WTC11 (cell line): ENCODE measurements at regions of chr13 and their contacts with region 1.

Region 1: GRCh38 chr13:31909864-31910551 is 121.6 kb upstream of the FRY start:
- DNase-seq: no peak
- ATAC-seq: peak; percentile 47
- H3K4me3 Mint-ChIP-seq: no peak overlapping the region
- H3K27ac Mint-ChIP-seq: no peak overlapping the region
- H3K4me1 Mint-ChIP-seq: peaks cover 17% of the 10 kb centered on the region
- H3K27me3 Mint-ChIP-seq: no peaks in the 10 kb centered on the region
- CTCF ChIP-seq: peak; percentile 74

Region 2: DNA sequence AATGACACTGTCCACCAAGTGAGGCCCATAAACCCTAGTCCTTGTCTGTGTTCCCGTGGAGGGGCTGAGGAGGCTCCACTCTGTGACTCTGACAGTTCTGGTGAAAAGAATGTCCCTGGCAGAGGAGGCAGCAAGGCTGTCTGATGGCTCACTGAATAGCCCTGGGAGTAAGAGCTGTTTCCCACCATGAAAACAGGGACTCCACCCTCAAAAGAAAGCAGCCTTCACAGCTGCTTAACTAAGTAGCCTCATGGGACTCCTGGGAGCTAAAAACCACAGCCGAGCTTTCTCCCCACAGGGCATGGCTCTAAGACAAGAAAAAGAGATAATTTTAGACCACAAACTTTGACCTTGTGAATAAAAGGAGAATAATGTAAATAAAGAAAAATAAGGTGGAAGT is 13.6 kb before region 1 on chr13:
- CTCF ChIA-PET with region 1: interaction called, 17 read pairs
- POLR2A ChIA-PET with region 1: no interaction called
- DNase-seq: no peak
- ATAC-seq: no peak
- H3K4me3 Mint-ChIP-seq: no peak overlapping the region
- H3K27ac Mint-ChIP-seq: no peak overlapping the region
- H3K4me1 Mint-ChIP-seq: peaks cover 7% of the 10 kb centered on the region
- H3K27me3 Mint-ChIP-seq: no peaks in the 10 kb centered on the region
- CTCF ChIP-seq: no peak

Region 3: DNA sequence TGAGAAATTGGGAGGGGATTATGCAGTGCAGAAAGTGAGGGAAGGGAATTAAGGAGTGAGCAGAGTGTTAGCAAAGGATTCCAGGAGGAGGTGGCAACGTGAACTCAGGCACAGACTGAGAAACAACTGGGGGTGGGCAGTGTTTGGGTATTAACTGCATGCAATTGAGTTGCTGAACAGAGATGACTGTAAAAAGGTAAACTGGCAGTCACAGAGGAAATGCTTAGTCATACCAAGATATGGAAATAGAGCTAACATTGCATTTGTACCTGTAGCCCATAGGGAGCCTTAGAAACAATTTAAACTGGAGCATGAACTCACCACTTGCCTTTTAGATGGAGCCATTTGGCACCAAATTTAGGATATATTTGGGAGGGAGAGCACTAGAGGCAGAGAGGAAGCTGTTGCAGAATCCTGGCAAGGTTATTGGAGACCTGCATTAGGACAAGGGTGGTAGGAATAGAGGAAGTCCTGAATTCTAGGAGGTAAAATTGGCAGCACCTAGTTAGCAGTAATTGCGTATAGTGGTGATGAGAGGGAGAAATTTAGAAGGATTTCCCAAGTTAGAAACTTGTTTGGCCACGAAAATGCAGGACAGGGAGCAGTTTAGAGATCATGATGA is 21.0 kb after region 1 on chr13:
- CTCF ChIA-PET with region 1: interaction called, 12 read pairs
- POLR2A ChIA-PET with region 1: no interaction called
- DNase-seq: no peak
- ATAC-seq: no peak; the same call in 1 of the 2 replicates
- H3K4me3 Mint-ChIP-seq: no peak overlapping the region
- H3K27ac Mint-ChIP-seq: no peak overlapping the region
- H3K4me1 Mint-ChIP-seq: peaks cover 8% of the 10 kb centered on the region
- H3K27me3 Mint-ChIP-seq: no peaks in the 10 kb centered on the region
- CTCF ChIP-seq: no peak

Region 4: DNA sequence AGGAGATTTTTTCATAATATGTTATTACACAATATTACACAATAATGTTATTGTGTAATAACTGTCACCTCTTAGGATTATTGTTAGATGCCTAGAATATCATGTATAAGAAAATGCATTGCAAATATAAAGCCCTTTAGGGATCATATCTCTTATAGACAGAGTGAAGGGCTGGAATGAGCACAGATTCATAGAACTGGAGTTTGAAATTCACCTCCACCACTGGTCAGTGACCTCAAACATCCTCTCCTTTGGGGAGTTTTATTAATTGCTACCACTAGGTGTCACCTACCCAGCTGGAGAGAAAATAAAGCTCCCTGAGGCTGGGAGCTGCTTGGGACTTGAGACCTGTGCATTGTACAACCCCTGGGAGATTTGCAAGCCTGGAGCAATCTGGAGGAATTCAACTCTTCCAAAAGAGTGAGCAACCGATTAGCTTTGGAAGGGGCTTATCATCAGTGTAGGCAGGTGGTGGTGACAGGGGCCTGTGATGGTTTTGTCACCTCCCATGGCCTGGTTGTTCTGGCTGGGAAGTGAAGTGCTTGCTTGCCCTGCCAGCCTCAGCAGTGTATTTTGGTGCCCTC is 91.3 kb after region 1 on chr13:
- CTCF ChIA-PET with region 1: interaction called, 10 read pairs
- POLR2A ChIA-PET with region 1: no interaction called
- DNase-seq: peak; percentile 19
- ATAC-seq: peak; percentile 86
- H3K4me3 Mint-ChIP-seq: no peak overlapping the region
- H3K27ac Mint-ChIP-seq: no peak overlapping the region
- H3K4me1 Mint-ChIP-seq: no peaks in the 10 kb centered on the region
- H3K27me3 Mint-ChIP-seq: no peaks in the 10 kb centered on the region
- CTCF ChIP-seq: 0 out of 2 replicates have a peak, but pooled peaks have one; percentile 30

Region 5: DNA sequence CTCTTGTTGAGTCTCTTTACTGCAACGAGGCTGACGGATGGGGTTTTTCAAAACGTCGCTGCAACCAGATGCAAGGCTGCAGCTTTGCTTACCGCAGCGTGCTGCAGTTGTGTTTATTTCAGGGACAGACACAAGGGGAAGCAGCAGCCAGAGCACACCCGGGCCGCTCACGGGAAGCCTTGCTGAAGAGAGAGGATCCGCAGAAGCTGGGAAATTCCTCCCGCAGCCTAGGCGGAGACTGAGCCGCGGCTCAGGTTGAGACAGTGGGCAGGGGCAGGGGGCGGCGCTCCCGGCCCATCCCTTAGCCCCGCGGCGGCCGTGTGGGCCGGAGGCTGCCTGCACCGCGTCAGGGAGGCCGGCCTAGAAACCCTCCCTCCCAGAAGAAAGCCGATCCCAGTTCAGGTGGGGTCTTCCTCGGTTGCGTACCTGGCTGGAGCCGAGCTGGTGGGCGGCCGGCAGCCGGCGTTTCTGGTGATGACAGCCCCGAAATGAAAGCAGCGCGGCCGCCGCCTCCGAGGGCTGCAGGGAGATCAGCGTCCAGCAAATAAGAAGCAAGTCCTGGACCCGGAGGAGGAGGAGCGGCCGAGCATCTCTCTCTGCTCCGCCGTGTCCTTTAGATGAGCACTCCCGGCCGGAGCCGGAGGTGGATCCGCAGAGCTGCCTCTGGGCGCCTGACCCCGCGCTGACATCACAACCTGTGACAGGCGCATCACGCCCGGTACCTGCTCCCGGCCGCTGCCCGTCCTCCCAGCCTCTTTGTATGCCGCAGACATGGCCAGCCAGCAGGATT is 121.2 kb after region 1 on chr13 and contains the start of gene FRY:
- CTCF ChIA-PET with region 1: interaction called, 20 read pairs
- POLR2A ChIA-PET with region 1: no interaction called
- DNase-seq: peak; percentile 85
- ATAC-seq: peak; percentile 94
- H3K4me3 Mint-ChIP-seq: peak within 1 kb of the TSS; percentile 78
- H3K27ac Mint-ChIP-seq: peak within 1 kb of the TSS; percentile 92
- H3K4me1 Mint-ChIP-seq: peaks cover 48% of the 10 kb centered on the region
- H3K27me3 Mint-ChIP-seq: no peaks in the 10 kb centered on the region
- CTCF ChIP-seq: no peak
- total RNA-seq, gene FRY: 4.3 to 5.3 TPM (median 4.8 TPM) in 3 replicates

Region 6: GRCh38 chr13:32246468-32246867 is 336.5 kb after region 1 on chr13:
- CTCF ChIA-PET with region 1: interaction called, 12 read pairs
- POLR2A ChIA-PET with region 1: no interaction called
- DNase-seq: peak; percentile 81
- ATAC-seq: peak; percentile 100
- H3K4me3 Mint-ChIP-seq: no peak overlapping the region
- H3K27ac Mint-ChIP-seq: no peak overlapping the region
- H3K4me1 Mint-ChIP-seq: peaks cover 4% of the 10 kb centered on the region
- H3K27me3 Mint-ChIP-seq: no peaks in the 10 kb centered on the region
- CTCF ChIP-seq: peak; percentile 54

Region 7: DNA sequence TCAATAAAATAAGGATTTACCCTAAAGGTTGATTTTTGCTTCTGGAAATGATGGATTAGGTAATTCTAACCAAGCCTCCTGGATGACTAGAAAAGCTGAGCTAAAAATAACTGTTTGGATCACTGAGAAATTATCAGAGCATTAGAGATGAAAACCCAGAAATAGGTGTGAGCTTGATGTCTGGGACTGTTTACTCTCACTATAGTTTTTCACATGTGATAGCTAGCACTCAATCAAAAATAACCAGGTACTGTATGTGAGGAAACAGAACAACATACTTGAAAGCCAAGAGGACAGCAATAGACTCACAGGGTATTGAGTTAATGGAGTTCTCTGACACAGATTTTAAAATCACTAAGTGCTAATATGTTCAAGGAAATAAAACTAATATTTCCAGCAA is 395.6 kb after region 1 on chr13:
- CTCF ChIA-PET with region 1: interaction called, 10 read pairs
- POLR2A ChIA-PET with region 1: no interaction called
- DNase-seq: no peak
- ATAC-seq: no peak
- H3K4me3 Mint-ChIP-seq: no peak overlapping the region
- H3K27ac Mint-ChIP-seq: no peak overlapping the region
- H3K4me1 Mint-ChIP-seq: no peaks in the 10 kb centered on the region
- H3K27me3 Mint-ChIP-seq: no peaks in the 10 kb centered on the region
- CTCF ChIP-seq: no peak